Dendritic cell treated with granulocyte-macrophage colony-stimulating factor and Interleukin-4, amounts not matched to agents 40 ng/mL and 50 ng/mL, for 4 days (primary cell): ENCODE measurements at regions of chr19 and their contacts with region 1.

Region 1: GRCh38 chr19:44071824-44072542 is at the start of gene ZNF284:
- H3K4me3 Mint-ChIP-seq: peak within 1 kb of the TSS; percentile 90
- H3K27ac Mint-ChIP-seq: peak within 1 kb of the TSS; percentile 84
- H3K4me1 Mint-ChIP-seq: peaks cover 21% of the 10 kb centered on the region
- H3K27me3 Mint-ChIP-seq: peaks cover 6% of the 10 kb centered on the region

Region 2: DNA sequence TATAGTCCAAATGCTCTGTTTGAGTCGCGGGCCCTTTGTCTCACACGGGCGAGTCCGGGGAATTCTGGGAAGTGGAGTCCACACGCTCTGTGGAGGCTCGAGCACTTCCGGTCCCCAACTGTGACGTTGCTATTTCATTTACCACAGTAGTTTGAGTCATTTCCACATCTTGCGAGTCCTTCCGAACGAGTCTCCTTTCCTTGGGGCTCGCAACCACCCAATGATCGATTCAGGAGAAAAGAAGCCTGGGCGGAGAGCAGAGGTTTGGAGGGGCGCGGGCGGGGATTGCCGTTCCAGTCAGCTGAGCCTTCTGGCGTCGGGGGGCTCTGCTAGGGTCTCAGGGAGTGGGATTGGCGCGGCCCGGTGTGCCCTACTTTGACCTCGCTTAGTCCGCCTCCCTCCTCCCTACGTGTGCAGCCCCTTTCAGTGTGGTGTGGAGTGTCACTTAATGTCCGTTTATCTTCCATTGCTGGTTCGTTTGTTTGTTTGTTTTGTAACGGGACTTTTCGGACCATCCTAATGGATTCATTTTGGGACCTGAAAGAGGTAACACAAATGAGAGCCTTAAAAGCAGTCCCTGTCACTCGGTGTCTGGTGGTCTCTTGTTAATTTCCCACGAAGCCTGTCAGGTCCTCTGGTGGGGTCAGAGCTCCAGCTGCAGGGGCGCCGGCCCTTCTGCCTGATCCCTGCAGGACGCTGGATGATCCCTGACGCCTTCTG is 46.6 kb before region 1 on chr19 and contains the start of gene ZNF222:
- intact Hi-C with region 1: loop called (anchors 1 kb)
- H3K4me3 Mint-ChIP-seq: peak within 1 kb of the TSS; percentile 99
- H3K27ac Mint-ChIP-seq: peak within 1 kb of the TSS; percentile 96
- H3K4me1 Mint-ChIP-seq: peaks cover 20% of the 10 kb centered on the region
- H3K27me3 Mint-ChIP-seq: peaks cover 2% of the 10 kb centered on the region

Region 3: GRCh38 chr19:44051654-44052402 is 20.2 kb before region 1 on chr19 and contains the start of gene ZNF223:
- intact Hi-C with region 1: loop called (anchors 1 kb)
- H3K4me3 Mint-ChIP-seq: peak within 1 kb of the TSS; percentile 88
- H3K27ac Mint-ChIP-seq: peak within 1 kb of the TSS; percentile 90
- H3K4me1 Mint-ChIP-seq: peaks cover 21% of the 10 kb centered on the region
- H3K27me3 Mint-ChIP-seq: peaks cover 18% of the 10 kb centered on the region

Region 4: DNA sequence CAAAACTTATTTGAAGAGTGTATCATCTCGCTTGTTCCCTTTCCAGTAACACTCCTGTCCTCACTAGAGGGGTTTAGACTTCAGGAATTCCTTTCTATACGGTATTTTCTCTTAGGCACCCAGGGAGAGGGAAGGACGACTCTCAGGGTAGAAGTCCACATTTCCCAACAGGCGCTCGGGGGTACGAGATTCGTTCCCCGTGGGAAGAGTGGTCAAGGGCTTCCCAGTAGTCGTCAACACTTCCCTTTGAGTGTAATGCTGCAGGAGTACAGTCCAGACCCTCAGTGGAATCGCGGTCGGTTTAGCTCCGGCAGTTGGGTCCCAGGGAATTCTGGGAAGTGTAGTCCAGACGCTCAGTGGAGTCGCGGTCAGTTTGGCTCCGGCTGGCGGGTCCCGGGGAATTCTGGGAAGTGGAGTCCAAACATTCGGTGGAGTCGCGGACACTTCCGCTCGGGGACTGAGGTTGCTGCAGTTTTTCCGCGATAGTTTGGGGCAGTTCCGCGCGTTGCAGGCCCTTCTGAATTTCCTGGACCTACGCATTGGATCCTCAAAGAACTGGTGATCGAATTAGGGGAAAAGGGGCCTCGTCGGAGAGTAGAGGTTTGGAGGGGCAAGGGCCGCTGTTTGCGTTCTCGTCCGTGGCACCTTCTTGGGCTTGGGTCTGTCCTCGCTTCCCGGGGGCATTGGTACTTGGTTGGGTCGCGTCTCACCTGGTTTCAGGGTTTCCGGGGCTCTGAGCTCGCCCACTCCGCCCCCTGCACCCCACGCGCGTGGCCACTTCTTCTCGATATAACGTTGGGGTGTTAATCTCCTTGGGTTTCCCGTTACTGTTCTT is 22.2 kb after region 1 on chr19 and contains the start of gene ZNF224:
- intact Hi-C with region 1: loop called (anchors 1 kb)
- H3K4me3 Mint-ChIP-seq: peak within 1 kb of the TSS; percentile 95
- H3K27ac Mint-ChIP-seq: peak within 1 kb of the TSS; percentile 93
- H3K4me1 Mint-ChIP-seq: peaks cover 7% of the 10 kb centered on the region
- H3K27me3 Mint-ChIP-seq: peaks cover 3% of the 10 kb centered on the region